ENCODE measurements at regions of chr11 and their contacts with region 1.

Region 1: GRCh38 chr11:14907411-14908213 is 15.6 kb upstream of the CYP2R1 start:
- DNase-seq: peak; percentile 64 to 85 (median 75)
- ATAC-seq: peak; percentile 76
- H3K4me3 ChIP-seq: no peak overlapping the region
- H3K4me3 Mint-ChIP-seq: peak overlapping the region in 5 of 10 donors; percentile 1 to 98 (median 12)
- H3K27ac ChIP-seq: no peak overlapping the region
- H3K27ac Mint-ChIP-seq: peak overlapping the region in 8 of 9 donors; percentile 19 to 94 (median 73)
- H3K4me1 ChIP-seq: peaks cover 0 to 9% of the 10 kb centered on the region in 2 donors
- H3K4me1 Mint-ChIP-seq: peaks cover 26 to 54% (median 43%) of the 10 kb centered on the region in 7 donors
- H3K27me3 ChIP-seq: no peaks in the 10 kb centered on the region
- H3K27me3 Mint-ChIP-seq: no peaks in the 10 kb centered on the region

Region 2: DNA sequence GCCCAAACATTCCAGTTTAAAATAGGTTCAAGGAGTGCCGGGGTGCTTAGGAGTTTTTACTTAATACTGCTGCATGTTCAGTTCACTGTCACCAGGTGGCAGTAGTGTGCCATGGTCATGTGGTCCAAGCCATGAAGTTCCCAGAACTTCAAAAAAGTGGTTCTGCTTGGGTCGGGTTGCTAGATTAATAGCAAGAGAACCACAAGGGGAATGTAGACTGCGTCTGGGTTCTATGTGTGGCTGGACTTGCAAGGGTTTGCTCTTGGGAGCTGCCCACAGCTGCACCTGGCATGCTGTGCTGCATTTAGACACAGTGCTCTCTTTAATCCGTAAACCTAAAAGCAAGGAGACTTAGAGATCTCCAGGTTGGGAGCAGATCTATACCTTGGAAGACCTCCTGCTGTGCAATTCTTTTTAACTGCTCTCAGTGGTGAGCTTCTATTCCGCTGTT is 951.6 kb before region 1 on chr11:
- CTCF ChIA-PET with region 1: interaction called, 3 read pairs
- POLR2A ChIA-PET with region 1: no interaction called
- intact Hi-C with region 1: loop called (anchors 10 kb)
- DNase-seq: peak in 8 of 9 donors; percentile 39 to 75 (median 56)
- ATAC-seq: peak; percentile 91
- H3K4me3 ChIP-seq: no peak overlapping the region
- H3K4me3 Mint-ChIP-seq: no peak overlapping the region
- H3K27ac ChIP-seq: no peak overlapping the region
- H3K27ac Mint-ChIP-seq: no peak overlapping the region
- H3K4me1 ChIP-seq: no peaks in the 10 kb centered on the region
- H3K4me1 Mint-ChIP-seq: peaks cover 0 to 2% (median 0%) of the 10 kb centered on the region in 7 donors
- H3K27me3 ChIP-seq: no peaks in the 10 kb centered on the region
- H3K27me3 Mint-ChIP-seq: peaks cover 18 to 55% (median 22%) of the 10 kb centered on the region in 5 donors

Region 3: DNA sequence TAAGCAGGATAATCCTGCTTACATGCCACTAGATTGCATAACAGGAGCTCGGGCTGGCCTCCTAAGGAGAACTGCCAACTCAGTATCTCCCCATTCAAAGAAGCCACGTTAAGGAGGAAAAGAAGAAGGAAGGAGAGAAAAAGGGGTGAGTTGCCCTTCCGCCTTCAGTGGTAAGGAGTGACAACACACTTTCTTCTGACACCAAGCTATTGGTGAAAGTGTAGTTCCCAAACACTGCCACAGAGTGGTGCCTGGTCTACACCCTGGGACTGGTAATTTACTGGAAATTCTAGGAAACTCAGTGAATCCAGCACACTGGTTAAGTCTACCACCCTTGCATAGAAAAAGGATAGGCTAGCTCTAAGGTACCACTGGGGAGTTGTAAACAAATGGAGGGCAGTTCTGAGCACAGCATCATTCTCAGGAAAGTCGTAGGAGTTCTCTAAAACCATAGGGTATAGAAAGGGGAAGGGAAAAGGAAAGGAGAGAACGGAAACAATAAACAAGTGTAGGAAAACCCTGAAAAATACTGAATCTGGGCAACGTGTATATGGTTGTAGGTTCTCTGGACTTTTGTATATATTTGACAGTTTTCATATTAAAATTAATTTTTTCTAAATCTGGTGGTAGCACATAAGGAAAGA is 606.8 kb before region 1 on chr11:
- CTCF ChIA-PET with region 1: interaction called, 19 read pairs
- POLR2A ChIA-PET with region 1: no interaction called
- intact Hi-C with region 1: loop called (anchors 1 kb)
- DNase-seq: peak in 7 of 9 donors; percentile 19 to 47 (median 26)
- ATAC-seq: peak; percentile 88
- H3K4me3 ChIP-seq: no peak overlapping the region
- H3K4me3 Mint-ChIP-seq: no peak overlapping the region
- H3K27ac ChIP-seq: no peak overlapping the region
- H3K27ac Mint-ChIP-seq: no peak overlapping the region
- H3K4me1 ChIP-seq: no peaks in the 10 kb centered on the region
- H3K4me1 Mint-ChIP-seq: peaks cover 0 to 35% (median 0%) of the 10 kb centered on the region in 7 donors
- H3K27me3 ChIP-seq: no peaks in the 10 kb centered on the region
- H3K27me3 Mint-ChIP-seq: no peaks in the 10 kb centered on the region

Region 4: GRCh38 chr11:14537134-14537599 is 370.4 kb before region 1 on chr11:
- CTCF ChIA-PET with region 1: interaction called, 7 read pairs
- POLR2A ChIA-PET with region 1: no interaction called
- intact Hi-C with region 1: loop called (anchors 1 kb)
- DNase-seq: peak in 7 of 9 donors; percentile 39 to 74 (median 69)
- ATAC-seq: peak; percentile 93
- H3K4me3 ChIP-seq: no peak overlapping the region
- H3K4me3 Mint-ChIP-seq: peak overlapping the region in 9 of 10 donors; percentile 48 to 86 (median 79)
- H3K27ac ChIP-seq: peak overlapping the region; percentile 69
- H3K27ac Mint-ChIP-seq: peak overlapping the region; percentile 77 to 99 (median 90)
- H3K4me1 ChIP-seq: peaks cover 0 to 17% of the 10 kb centered on the region in 2 donors
- H3K4me1 Mint-ChIP-seq: peaks cover 9 to 51% (median 45%) of the 10 kb centered on the region in 7 donors
- H3K27me3 ChIP-seq: no peaks in the 10 kb centered on the region
- H3K27me3 Mint-ChIP-seq: no peaks in the 10 kb centered on the region

Region 5: GRCh38 chr11:14551380-14551779 is 356.2 kb before region 1 on chr11:
- CTCF ChIA-PET with region 1: no interaction called
- POLR2A ChIA-PET with region 1: no interaction called
- intact Hi-C with region 1: no loop called
- DNase-seq: no peak
- ATAC-seq: no peak
- H3K4me3 ChIP-seq: no peak overlapping the region
- H3K4me3 Mint-ChIP-seq: no peak overlapping the region
- H3K27ac ChIP-seq: no peak overlapping the region
- H3K27ac Mint-ChIP-seq: peak overlapping the region in 3 of 9 donors; percentile 43 to 82 (median 75)
- H3K4me1 ChIP-seq: peaks cover 19 to 20% of the 10 kb centered on the region in 2 donors
- H3K4me1 Mint-ChIP-seq: peaks cover 15 to 54% (median 43%) of the 10 kb centered on the region in 7 donors
- H3K27me3 ChIP-seq: no peaks in the 10 kb centered on the region
- H3K27me3 Mint-ChIP-seq: no peaks in the 10 kb centered on the region

Region 6: DNA sequence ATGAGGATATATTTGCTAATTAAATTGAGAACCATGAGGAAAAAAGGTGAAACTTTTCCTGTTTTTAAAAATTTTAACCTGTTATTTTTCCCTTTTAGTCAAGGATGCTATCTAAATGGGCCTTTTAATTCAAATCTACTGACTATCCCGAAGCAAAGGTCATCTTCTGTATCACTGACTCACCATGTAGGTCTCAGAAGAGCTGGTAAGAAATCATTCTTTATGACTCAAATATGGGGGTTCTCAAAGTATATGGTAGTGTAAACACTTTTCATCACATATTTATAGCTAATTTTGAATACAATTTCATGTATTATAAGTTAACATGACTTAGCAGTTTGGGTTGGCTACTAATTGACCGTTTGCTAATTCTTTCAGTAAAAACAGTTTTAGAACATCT is 103.8 kb before region 1 on chr11:
- CTCF ChIA-PET with region 1: interaction called, 10 read pairs
- POLR2A ChIA-PET with region 1: no interaction called
- intact Hi-C with region 1: no loop called
- DNase-seq: no peak
- ATAC-seq: no peak
- H3K4me3 ChIP-seq: no peak overlapping the region
- H3K4me3 Mint-ChIP-seq: no peak overlapping the region
- H3K27ac ChIP-seq: no peak overlapping the region
- H3K27ac Mint-ChIP-seq: no peak overlapping the region
- H3K4me1 ChIP-seq: no peaks in the 10 kb centered on the region
- H3K4me1 Mint-ChIP-seq: peaks cover 7 to 37% (median 24%) of the 10 kb centered on the region in 7 donors
- H3K27me3 ChIP-seq: no peaks in the 10 kb centered on the region
- H3K27me3 Mint-ChIP-seq: no peaks in the 10 kb centered on the region

Region 7: GRCh38 chr11:14842002-14842401 is 65.6 kb before region 1 on chr11:
- CTCF ChIA-PET with region 1: no interaction called
- POLR2A ChIA-PET with region 1: no interaction called
- intact Hi-C with region 1: no loop called
- DNase-seq: no peak
- ATAC-seq: no peak
- H3K4me3 ChIP-seq: no peak overlapping the region
- H3K4me3 Mint-ChIP-seq: no peak overlapping the region
- H3K27ac ChIP-seq: no peak overlapping the region
- H3K27ac Mint-ChIP-seq: no peak overlapping the region
- H3K4me1 ChIP-seq: no peaks in the 10 kb centered on the region
- H3K4me1 Mint-ChIP-seq: peaks cover 0 to 11% (median 4%) of the 10 kb centered on the region in 7 donors
- H3K27me3 ChIP-seq: no peaks in the 10 kb centered on the region
- H3K27me3 Mint-ChIP-seq: no peaks in the 10 kb centered on the region

Region 8: DNA sequence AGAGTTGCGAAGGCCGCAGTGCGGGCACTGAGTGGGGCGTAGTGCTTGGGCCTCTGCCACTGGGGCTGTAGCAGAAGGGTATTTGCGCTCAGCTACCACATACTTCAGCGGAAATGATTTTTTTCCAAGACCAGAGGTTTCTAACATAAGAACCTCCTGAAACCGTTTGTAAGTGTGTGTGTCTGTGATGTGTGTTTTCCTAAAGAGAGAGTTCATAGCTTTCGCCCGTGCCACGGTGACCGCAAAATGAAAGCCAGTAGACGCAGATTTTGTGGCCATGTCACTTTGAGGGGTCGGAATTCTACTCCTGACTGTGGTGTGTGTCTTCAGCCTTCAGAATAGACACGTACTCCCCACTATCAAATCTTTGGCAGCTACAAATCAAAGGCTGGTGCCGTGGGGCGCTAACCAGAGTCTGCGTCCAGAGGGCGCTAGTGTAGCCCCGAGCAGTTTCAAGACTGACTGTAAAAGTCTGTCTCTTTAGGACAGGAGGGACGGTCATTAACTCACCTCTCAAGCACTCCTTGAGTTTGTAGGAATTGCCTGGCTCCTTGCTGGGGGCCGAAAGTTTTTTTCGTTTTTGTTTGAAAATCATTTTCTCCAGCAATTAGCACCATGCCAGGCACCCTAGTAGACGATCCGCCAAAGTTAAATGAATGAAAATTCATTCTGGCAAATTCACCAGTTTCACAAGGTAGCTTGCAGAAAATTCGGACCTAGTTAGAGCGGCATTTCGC is 67.1 kb after region 1 on chr11:
- CTCF ChIA-PET with region 1: interaction called, 12 read pairs
- POLR2A ChIA-PET with region 1: no interaction called
- intact Hi-C with region 1: loop called (anchors 2 kb)
- DNase-seq: peak; percentile 22 to 51 (median 47)
- ATAC-seq: peak; percentile 80
- H3K4me3 ChIP-seq: peak overlapping the region; percentile 47
- H3K4me3 Mint-ChIP-seq: peak overlapping the region; percentile 76 to 92 (median 83)
- H3K27ac ChIP-seq: no peak overlapping the region
- H3K27ac Mint-ChIP-seq: no peak overlapping the region
- H3K4me1 ChIP-seq: peaks cover 11 to 16% of the 10 kb centered on the region in 2 donors
- H3K4me1 Mint-ChIP-seq: peaks cover 20 to 38% (median 32%) of the 10 kb centered on the region in 7 donors
- H3K27me3 ChIP-seq: peaks cover 10 to 25% of the 10 kb centered on the region in 2 donors
- H3K27me3 Mint-ChIP-seq: peaks cover 66 to 89% (median 76%) of the 10 kb centered on the region in 5 donors

Region 9: DNA sequence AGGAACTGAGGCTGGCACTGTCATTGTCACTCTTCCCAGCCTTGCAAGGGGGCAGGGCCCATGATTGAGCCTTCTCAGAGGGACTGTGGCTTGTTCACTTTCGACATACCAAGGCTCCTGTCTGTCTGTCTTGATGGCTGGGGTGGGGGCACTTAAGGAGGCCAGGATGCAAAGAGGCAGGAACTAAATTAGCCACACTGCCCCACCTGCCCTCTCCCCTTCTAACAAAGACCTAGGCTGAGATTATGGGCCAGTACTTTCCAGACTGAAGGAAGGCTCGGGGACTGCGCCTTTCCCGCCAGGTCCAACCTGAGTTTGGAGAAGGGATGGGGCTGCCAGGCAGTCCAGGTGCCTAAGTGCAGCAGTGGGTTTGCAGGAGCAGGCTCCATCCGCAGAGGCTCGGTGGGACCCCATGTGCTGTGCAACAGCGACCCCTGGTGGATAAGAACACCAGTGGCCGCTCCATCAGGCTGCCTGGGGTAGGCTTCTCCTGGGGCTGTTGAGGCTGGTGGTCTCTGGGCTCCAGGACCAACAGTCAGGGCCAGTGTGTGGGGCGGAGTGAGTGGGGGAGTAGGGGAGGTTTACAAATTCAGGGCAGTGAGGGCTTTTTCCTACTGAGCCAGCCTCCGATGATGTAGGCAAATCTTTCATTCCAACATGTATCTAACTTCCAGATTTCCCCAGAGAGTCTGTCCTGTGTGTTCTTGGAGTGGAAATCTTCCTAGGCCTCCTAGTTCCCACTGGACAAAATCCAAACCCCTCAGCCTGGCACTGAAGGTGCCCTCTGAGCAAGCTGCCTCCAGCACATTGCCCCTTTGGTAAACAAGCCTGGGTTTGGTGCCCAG is 301.0 kb after region 1 on chr11:
- CTCF ChIA-PET with region 1: interaction called, 24 read pairs
- POLR2A ChIA-PET with region 1: no interaction called
- intact Hi-C with region 1: loop called (anchors 1 kb)
- DNase-seq: peak; percentile 33 to 78 (median 66)
- ATAC-seq: peak; percentile 86
- H3K4me3 ChIP-seq: no peak overlapping the region
- H3K4me3 Mint-ChIP-seq: no peak overlapping the region
- H3K27ac ChIP-seq: no peak overlapping the region
- H3K27ac Mint-ChIP-seq: no peak overlapping the region
- H3K4me1 ChIP-seq: no peaks in the 10 kb centered on the region
- H3K4me1 Mint-ChIP-seq: no peaks in the 10 kb centered on the region
- H3K27me3 ChIP-seq: no peaks in the 10 kb centered on the region
- H3K27me3 Mint-ChIP-seq: peaks cover 0 to 2% (median 0%) of the 10 kb centered on the region in 5 donors